ENCODE measurements at regions of chr11 and their contacts with region 1.

Region 1: DNA sequence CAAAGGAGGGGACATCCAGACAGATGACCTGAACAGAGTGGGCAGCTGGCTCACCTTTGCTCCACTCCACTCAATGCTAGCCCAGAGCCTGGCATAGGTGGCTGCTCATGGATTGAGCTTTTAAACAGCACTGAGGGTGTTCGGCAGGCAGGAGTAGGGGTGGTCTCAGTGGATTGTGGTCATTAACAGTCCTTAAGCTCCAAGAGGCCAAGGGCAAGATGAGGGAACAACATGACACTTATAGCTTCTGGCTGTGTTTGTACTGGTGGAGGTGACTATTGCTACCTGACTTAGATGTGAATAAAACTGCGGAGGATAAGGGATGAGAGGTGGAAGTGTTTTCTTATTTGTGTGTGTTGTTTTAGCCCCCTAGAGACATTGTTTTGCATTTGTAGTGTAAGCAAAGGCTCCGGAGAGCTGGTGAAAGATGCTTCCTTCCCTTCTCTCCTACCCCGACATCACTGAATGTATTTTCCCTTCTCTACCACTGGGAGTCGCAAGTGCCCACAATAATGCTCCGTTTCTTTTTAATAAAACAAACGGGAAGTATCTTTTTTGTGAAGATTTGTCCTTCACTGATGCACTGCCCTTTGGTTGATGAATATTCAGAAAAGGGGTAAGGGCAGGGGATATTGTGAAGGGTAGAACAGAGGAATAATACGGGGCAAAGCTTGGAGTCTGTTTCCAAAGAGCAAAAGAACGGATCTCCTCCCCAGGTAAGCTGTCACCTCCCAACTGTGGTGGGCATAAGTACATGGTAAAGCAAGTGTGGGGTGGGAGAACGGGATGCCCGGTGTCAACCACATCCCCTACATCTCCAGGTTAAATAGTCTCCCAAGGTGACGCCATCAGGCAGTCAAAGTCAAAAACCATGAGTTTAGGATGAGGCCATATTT is 27.5 kb upstream of the MTNR1B start:
- DNase-seq: peak in 1 of 2 experiments; percentile 50
- H3K4me3 ChIP-seq: no peak overlapping the region
- H3K27ac ChIP-seq: no peak overlapping the region
- H3K4me1 ChIP-seq: no peaks in the 10 kb centered on the region
- H3K27me3 ChIP-seq: no peaks in the 10 kb centered on the region
- CTCF ChIP-seq: peak; percentile 95

Region 2: GRCh38 chr11:93067881-93068390 is 126.0 kb after region 1 on chr11:
- CTCF ChIA-PET with region 1: interaction called, 3 read pairs
- POLR2A ChIA-PET with region 1: no interaction called
- intact Hi-C with region 1: loop called (anchors 5 kb)
- DNase-seq: no peak
- H3K4me3 ChIP-seq: no peak overlapping the region
- H3K27ac ChIP-seq: no peak overlapping the region
- H3K4me1 ChIP-seq: no peaks in the 10 kb centered on the region; the same call in 1 of the 2 replicates
- H3K27me3 ChIP-seq: no peaks in the 10 kb centered on the region
- CTCF ChIP-seq: no peak

Region 3: DNA sequence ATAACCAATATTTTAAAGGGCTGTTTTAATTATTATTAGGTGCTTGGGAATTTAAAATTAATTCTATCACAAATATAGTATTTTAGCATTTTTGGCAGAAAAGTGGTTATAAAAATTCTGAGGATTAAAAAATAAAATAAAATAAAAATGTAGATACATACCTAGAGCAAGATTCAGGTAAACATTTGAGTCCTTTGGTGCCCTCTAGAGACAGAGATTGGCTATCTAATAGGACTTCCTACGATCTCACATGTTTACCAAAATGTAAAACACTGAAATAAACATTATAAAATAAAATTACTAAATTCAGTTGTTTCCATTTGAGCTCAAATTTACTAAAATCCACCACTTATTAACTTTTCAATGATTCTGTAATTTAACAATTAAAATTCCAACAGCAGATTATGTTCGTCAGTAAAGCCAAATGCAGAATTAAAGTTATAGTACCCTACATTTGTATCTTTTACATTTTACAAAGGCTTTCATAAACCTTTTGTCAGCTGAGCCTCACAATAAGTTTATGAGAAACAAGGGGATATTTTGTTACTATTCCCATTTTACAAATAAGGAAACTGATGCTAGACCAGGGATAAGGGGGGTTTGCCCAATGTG is 228.1 kb after region 1 on chr11:
- CTCF ChIA-PET with region 1: no interaction called
- POLR2A ChIA-PET with region 1: no interaction called
- intact Hi-C with region 1: loop called (anchors 2 kb)
- DNase-seq: no peak
- H3K4me3 ChIP-seq: no peak overlapping the region
- H3K27ac ChIP-seq: no peak overlapping the region
- H3K4me1 ChIP-seq: no peaks in the 10 kb centered on the region
- H3K27me3 ChIP-seq: no peaks in the 10 kb centered on the region
- CTCF ChIP-seq: peak; percentile 72

Region 4: GRCh38 chr11:93197380-93198214 is 255.7 kb after region 1 on chr11 and contains the start of gene SLC36A4:
- CTCF ChIA-PET with region 1: no interaction called
- POLR2A ChIA-PET with region 1: no interaction called
- intact Hi-C with region 1: loop called (anchors 10 kb)
- DNase-seq: peak; percentile 82 to 91
- H3K4me3 ChIP-seq: peak within 1 kb of the TSS; percentile 68
- H3K27ac ChIP-seq: peak within 1 kb of the TSS; percentile 73
- H3K4me1 ChIP-seq: peaks cover 8% of the 10 kb centered on the region
- H3K27me3 ChIP-seq: no peaks in the 10 kb centered on the region
- CTCF ChIP-seq: no peak
- total RNA-seq, gene SLC36A4: 17.7 and 18.2 TPM in 2 replicates

Region 5: GRCh38 chr11:93225662-93226061 is 283.7 kb after region 1 on chr11:
- CTCF ChIA-PET with region 1: no interaction called
- POLR2A ChIA-PET with region 1: no interaction called
- intact Hi-C with region 1: loop called (anchors 5 kb)
- DNase-seq: no peak
- H3K4me3 ChIP-seq: no peak overlapping the region
- H3K27ac ChIP-seq: no peak overlapping the region
- H3K4me1 ChIP-seq: no peaks in the 10 kb centered on the region
- H3K27me3 ChIP-seq: no peaks in the 10 kb centered on the region
- CTCF ChIP-seq: peak; percentile 71

Region 6: GRCh38 chr11:93543292-93543977 is 601.5 kb after region 1 on chr11 and contains the start of gene SMCO4:
- CTCF ChIA-PET with region 1: no interaction called
- POLR2A ChIA-PET with region 1: no interaction called
- intact Hi-C with region 1: loop called (anchors 10 kb)
- DNase-seq: peak; percentile 68 to 78
- H3K4me3 ChIP-seq: peak within 1 kb of the TSS; percentile 81
- H3K27ac ChIP-seq: no peak within 1 kb of the TSS
- H3K4me1 ChIP-seq: peaks cover 15% of the 10 kb centered on the region
- H3K27me3 ChIP-seq: no peaks in the 10 kb centered on the region
- CTCF ChIP-seq: peak; percentile 70
- total RNA-seq, gene SMCO4: 19.6 and 23.0 TPM in 2 replicates

Measured in PC-9 (cell line).